ENCODE measurements at regions of chrX and their contacts with region 1.

Region 1: DNA sequence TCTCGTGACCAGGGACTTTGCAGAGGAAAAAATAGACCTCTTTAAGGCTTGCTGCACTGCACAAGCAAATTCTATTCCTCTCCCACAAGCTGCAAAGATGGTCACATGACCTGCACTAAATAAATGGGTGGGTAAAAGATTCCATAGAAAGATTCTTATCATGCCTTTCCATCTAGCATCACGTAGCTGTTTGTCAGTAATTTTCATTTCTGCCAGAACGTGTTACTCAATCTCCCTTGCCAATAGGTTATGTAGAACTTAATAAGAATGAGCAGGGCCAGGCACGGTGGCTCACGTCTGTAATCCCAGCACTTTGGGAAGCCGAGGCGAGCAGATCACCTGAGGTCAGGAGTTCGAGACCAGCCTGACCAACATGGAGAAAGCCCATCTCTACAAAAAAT is 57.8 kb upstream of the USP9X start:
- DNase-seq: no peak
- ATAC-seq: no peak
- H3K4me3 ChIP-seq: no peak overlapping the region
- H3K27ac ChIP-seq: no peak overlapping the region
- H3K4me1 ChIP-seq: peaks cover 5% of the 10 kb centered on the region
- H3K27me3 ChIP-seq: peaks cover 0 to 30% (median 0%) of the 10 kb centered on the region in 3 donors
- CTCF ChIP-seq: no peak

Region 2: DNA sequence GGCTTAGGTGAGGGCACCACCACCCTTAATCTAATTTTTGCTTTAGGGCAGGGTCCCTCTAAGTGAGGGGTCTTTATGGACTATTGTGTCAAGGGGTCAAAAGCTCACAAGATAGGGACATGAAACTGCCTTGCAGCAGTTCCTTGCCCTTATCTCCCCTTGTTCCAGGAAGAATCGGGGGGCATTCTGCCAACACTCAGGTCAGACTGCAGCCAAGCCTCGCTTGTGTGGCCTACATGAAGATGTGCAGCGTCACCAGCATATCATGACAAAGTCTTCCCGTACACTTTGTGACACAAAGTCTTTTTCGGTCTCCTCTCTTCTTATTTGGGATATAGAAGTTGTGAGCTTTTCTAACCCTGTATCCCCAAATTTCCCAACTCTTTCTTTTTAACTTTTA is 40.3 kb after region 1 on chrX:
- intact Hi-C with region 1: loop called in 1 of 2 experiments (anchors 5 kb)
- DNase-seq: no peak
- ATAC-seq: peak in 1 of 4 donors; percentile 48
- H3K4me3 ChIP-seq: no peak overlapping the region
- H3K27ac ChIP-seq: no peak overlapping the region
- H3K4me1 ChIP-seq: no peaks in the 10 kb centered on the region
- H3K27me3 ChIP-seq: peaks cover 0 to 32% (median 0%) of the 10 kb centered on the region in 3 donors
- CTCF ChIP-seq: no peak

Measured in psoas muscle (tissue), 8 donors.